Naive thymus-derived CD8-positive, alpha-beta T cell (primary cell): ENCODE measurements at regions of chr6 and their contacts with region 1.

Region 1: GRCh38 chr6:90285611-90286381 is 10.8 kb downstream of the BACH2 start:
- DNase-seq: peak in 7 of 10 donors; percentile 37 to 87 (median 66)
- ATAC-seq: peak; percentile 60 to 72
- H3K4me3 Mint-ChIP-seq: peak overlapping the region; percentile 76 to 95 (median 86)
- H3K27ac Mint-ChIP-seq: peak overlapping the region; percentile 89 to 99 (median 94)
- H3K4me1 Mint-ChIP-seq: peaks cover 58 to 95% (median 92%) of the 10 kb centered on the region in 4 donors
- H3K27me3 Mint-ChIP-seq: no peaks in the 10 kb centered on the region

Region 2: GRCh38 chr6:90209527-90209926 is 76.3 kb before region 1 on chr6:
- POLR2A ChIA-PET with region 1: no interaction called
- DNase-seq: peak in 2 of 10 donors; percentile 48 to 49
- ATAC-seq: peak; percentile 48 to 66
- H3K4me3 Mint-ChIP-seq: peak overlapping the region; percentile 2 to 83 (median 62)
- H3K27ac Mint-ChIP-seq: peak overlapping the region in 7 of 10 donors; percentile 83 to 97 (median 92)
- H3K4me1 Mint-ChIP-seq: peaks cover 44 to 95% (median 88%) of the 10 kb centered on the region in 4 donors
- H3K27me3 Mint-ChIP-seq: no peaks in the 10 kb centered on the region

Region 3: GRCh38 chr6:90263633-90264032 is 22.2 kb before region 1 on chr6:
- POLR2A ChIA-PET with region 1: interaction called, 15 read pairs
- DNase-seq: no peak
- ATAC-seq: no peak
- H3K4me3 Mint-ChIP-seq: peak overlapping the region in 6 of 10 donors; percentile 28 to 70 (median 48)
- H3K27ac Mint-ChIP-seq: peak overlapping the region; percentile 14 to 99 (median 92)
- H3K4me1 Mint-ChIP-seq: peaks cover 43 to 96% (median 94%) of the 10 kb centered on the region in 4 donors
- H3K27me3 Mint-ChIP-seq: no peaks in the 10 kb centered on the region

Region 4: DNA sequence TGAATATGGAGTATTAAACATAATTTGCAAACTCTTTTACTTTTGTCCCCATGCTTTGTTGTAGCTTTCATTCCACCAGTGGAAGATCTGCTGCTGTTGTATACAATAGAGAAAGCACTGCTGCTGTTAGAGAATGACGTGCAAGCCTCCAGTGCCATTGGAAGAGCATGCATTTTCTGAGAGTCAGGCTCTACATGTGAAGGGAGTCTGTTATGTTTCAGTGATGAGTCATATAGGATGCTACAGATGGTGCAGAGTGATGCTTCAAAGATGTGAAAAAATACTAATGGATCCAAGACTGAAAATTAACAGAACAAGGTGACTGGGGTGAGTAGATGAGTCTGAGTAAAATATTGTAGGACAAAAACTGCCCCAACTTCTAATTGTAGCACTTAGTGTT is 33.2 kb after region 1 on chr6:
- POLR2A ChIA-PET with region 1: no interaction called
- DNase-seq: no peak
- ATAC-seq: peak in 1 of 2 donors; percentile 30
- H3K4me3 Mint-ChIP-seq: no peak overlapping the region
- H3K27ac Mint-ChIP-seq: no peak overlapping the region
- H3K4me1 Mint-ChIP-seq: peaks cover 0 to 35% (median 7%) of the 10 kb centered on the region in 4 donors
- H3K27me3 Mint-ChIP-seq: no peaks in the 10 kb centered on the region

Region 5: DNA sequence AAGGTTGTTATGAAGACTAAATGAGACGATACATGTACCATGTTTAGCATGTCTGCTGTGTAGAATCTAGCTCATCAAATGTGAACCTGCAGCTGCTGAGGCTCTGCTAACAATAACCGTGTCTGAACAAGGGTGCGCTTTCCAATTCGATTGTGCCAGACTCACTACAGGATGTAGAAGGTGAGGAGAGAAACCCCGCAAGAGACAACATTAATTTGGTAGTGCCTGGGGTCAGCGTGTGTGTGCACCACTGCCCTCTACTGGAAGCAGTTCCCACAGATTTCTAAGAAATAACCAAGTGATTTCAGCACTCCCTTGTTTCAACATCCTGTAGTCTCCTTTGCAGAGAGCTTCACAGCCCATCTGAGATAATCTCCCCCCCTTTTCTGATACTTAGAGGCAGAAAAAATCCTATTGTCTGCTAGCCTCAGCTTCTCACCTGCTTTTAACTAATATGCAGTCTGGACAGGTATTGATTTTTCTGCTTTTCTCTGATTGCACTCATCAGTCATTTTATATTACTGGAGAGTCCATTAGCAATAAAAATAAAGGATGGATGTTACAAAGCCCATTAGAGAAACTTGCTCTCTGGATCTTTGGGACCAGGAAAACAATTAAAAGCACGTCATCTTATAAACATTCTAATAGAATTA is 107.6 kb after region 1 on chr6:
- POLR2A ChIA-PET with region 1: interaction called, 10 read pairs
- DNase-seq: peak; percentile 42 to 85 (median 78)
- ATAC-seq: peak; percentile 66 to 81
- H3K4me3 Mint-ChIP-seq: peak overlapping the region in 5 of 10 donors; percentile 6 to 62 (median 49)
- H3K27ac Mint-ChIP-seq: peak overlapping the region in 9 of 10 donors; percentile 13 to 68 (median 58)
- H3K4me1 Mint-ChIP-seq: peaks cover 20 to 41% (median 29%) of the 10 kb centered on the region in 4 donors
- H3K27me3 Mint-ChIP-seq: no peaks in the 10 kb centered on the region